Left colon (tissue), 2 donors: ENCODE measurements at regions of chr1 and their contacts with region 1.

Region 1: DNA sequence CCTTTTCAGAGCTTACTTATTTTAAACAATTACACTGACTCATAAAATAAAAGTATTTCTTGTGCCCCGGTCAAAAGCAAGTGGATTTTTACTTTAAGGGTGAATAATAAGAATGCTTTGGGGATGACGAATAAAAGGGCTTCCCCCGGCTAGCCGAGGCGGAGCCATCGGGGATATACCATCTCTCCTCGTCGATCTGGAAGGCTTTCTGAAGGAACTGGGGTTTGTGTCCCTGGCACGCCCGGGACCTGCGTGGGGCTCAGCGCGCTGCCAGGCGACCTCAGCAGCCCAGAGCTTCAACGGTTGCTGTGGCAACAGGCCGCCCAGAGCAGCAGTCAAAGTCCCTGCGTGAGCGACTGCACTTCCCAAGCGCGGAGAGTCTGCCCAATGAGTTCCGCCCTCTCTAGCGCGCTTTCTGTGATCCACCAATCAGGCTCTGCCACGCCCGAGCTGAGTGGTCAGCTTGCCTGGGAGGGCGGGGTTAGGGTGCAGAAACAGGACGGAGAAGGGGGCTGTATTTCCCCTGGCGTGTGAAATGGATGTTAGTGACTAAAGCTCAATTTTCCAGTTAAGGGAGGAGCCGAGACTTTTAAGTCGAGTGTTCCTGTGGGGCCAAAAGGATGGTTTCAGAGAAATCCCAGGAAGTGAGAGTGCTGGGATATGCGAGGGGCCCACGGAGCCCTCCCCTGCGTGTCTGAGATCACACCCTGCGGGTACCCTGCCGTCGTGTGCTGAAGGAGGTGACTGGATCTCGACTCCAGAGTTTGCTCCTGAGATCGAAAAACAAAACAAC is 33.0 kb upstream of the MGST3 start:
- DNase-seq: peak; percentile 97 to 98
- ATAC-seq: peak; percentile 99

Region 2: GRCh38 chr1:165144757-165145397 is 453.2 kb before region 1 on chr1:
- intact Hi-C with region 1: loop called in 1 of 2 experiments (anchors 10 kb)
- DNase-seq: peak; percentile 28 to 45
- ATAC-seq: peak; percentile 59

Region 3: DNA sequence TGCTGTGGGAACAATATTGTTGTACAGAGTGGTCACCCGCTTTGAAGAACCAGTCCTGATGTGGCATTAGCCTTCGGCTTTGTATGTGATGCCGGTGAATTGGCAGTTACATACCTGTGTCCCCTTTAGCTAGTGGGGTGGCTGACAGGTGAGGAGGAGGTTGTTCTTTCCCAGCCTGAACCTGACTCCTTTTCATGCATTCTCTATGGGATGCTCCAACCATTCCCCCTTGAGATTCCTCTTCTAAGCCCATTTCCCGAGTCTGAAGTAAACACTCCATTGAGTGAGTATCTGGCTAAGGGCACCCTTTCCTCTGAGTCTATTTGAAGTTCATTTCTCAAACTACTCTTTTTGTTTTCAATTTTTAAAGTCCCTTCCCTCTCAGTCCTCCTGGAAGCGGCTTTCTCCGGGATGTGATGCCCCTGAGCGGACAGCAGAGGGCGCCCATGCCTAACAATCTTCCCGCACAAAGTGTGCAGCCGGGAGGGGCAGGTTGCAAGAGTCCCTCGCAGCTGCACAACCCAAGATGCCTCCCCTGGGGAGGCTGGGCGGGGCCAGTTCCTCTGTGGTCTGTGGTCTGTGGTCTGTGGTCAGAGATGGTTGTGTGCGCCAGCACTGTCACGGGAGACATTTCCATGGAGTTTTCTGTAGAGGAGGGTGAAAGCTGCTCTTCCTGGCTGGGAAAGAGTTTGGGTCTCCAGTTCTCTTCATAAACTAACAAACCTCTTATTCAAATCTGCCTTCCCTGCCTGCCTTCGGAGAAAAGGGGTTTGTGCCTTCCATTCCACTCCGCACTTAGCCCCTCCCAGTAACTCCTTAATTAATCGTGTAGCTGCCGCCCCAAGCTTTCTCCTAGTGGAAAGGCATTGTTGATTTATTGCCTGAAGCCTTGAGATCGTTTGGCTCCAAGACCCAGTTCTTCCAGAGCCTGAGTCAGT is 205.2 kb before region 1 on chr1:
- intact Hi-C with region 1: loop called (anchors 5 kb)
- DNase-seq: peak; percentile 78 to 83
- ATAC-seq: peak; percentile 87

Region 4: DNA sequence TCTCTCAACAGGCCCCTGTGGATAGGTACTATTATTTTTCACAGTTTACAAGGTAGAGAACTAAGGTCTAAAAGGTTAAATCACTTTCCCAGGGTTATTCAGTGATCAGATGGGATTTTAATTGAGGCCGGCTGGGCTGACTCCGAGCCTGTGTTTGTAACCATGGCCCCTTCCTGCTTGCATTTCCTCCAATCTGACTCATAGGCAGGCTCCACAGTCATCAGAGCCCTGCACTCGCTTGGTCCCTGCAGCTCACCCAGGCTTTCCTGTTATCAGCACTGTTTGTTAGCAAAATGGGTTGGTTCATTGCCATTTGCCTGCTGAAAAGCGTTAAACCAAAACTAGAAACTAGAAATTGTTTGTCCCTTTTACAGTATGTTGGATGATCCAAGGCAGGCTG is 200.1 kb before region 1 on chr1:
- intact Hi-C with region 1: loop called (anchors 5 kb)
- DNase-seq: no peak
- ATAC-seq: no peak

Region 5: GRCh38 chr1:165914136-165914798 is 316.2 kb after region 1 on chr1:
- intact Hi-C with region 1: loop called in 1 of 2 experiments (anchors 5 kb)
- DNase-seq: peak; percentile 44 to 66
- ATAC-seq: peak; percentile 43